ENCODE measurements at regions of chr12 and their contacts with region 1.

Region 1: DNA sequence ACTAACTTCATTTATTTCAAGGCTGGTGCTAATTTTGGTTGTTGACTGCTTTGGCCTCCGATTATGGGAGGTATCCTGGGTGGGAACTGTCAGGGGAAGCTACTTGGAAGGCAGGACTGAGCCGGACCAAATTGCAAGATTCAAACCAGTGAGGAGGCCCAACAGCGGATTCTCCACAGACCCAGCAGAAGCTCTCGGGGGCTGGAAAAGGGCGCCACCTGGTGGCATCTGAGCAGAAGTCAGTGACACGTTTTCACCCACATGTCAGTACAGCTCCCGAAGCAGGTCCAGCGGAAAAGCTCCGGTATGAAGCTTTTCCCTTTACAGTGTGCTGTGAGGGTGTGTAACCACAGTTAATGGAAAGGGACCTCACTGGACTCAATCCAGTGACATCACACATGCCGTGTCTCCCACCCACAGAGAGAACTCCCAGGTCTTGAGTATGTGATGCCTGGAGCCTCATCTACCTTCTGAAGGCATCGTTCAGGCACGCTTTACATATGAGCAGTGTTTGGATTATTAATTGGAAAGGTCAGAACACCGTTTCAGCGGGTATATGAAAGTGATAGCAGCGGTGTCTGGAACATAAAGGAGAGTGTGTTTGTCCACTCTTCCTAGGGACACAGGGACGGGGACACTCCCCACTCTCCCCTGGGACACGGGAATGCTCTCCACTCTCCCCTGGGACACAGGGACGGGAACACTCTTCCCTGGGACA is 3.6 kb upstream of the P2RX2 start:
- DNase-seq: peak; percentile 86
- ATAC-seq: peak; percentile 88
- H3K4me3 Mint-ChIP-seq: no peak overlapping the region
- H3K27ac Mint-ChIP-seq: no peak overlapping the region
- H3K4me1 Mint-ChIP-seq: peaks cover 7% of the 10 kb centered on the region
- H3K27me3 Mint-ChIP-seq: peaks cover 30% of the 10 kb centered on the region

Region 2: DNA sequence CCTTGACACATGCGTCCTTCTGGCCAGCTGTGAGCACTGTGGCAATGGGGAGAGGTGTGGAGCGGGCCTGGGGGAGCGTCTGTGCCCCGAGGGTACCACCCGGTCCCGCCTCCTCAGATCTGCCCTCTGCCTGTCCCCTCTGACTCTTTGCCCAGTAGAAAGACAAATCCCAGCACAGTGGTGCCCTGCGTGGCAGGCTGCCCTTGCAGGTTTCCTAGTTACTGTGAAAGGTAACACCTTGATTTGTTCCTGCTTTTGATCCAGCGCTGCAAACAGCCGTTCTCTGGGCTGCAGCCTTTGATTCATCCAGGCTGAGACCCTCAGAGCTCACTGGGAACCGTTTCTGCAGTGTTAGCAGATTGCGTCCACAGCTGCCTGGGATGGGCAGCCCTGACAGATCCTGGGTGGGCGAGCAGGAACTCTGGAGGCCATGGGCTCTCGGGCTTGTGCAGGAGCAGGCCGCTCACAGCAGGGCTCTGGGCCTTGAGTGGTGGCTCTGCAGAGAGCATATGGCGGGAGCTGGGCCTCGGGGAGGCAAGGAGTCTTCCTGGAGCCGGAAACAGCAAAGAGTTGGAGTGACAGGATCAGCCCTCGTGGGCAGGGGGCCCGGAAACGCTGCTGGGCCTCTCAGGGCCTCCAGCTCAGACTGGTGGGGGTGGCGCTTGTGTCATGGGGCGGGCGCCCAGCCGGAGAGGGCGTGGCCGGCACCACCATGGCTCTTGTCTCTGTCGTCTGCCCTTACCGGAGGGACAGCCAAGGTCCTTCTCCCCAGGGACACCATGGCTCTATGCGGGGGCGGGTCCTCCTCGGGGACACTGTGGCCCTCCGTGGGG is 108.5 kb before region 1 on chr12:
- CTCF ChIA-PET with region 1: no interaction called
- POLR2A ChIA-PET with region 1: no interaction called
- DNase-seq: peak; percentile 83
- ATAC-seq: peak; percentile 93
- H3K4me3 Mint-ChIP-seq: peak overlapping the region; percentile 28
- H3K27ac Mint-ChIP-seq: peak overlapping the region; percentile 83
- H3K4me1 Mint-ChIP-seq: peaks cover 41% of the 10 kb centered on the region
- H3K27me3 Mint-ChIP-seq: no peaks in the 10 kb centered on the region

Region 3: DNA sequence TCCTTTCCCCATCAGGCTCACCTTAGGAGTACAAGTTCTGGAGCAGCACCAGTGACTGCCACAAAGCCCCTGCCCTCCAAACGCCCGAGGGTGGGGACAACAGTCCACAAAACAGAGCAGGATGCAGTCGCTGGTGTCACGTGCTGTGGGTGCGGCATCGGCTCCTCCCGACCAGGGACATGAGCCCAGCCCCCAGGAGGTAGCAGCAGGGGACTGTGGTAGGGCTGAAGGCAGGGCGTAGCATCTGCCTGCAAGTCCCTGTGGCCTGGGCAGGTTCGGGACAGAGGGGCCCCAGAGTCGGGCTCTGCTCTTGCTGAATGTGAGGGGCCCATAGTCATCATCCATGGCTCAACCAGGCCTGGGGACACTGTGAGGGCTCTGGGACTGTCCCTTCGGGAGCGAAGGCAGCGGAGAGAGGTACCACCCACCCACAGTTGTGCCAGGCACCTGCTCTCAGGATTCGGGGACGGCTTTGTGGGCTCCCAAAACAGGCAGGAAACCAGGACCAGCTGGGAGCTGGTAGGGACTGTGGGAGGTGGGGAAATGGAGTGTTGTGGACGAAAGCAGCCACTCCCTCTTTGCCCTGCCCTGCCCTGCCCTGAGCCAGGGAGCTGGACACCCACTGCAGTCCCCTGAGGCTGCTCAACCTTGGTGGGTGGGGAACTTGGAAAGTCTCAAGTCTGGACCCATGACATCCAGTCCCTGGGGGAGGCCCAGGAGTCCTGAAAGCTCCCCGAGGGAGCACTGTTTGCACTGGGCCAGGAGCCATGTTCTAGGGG is 94.4 kb before region 1 on chr12:
- CTCF ChIA-PET with region 1: no interaction called
- POLR2A ChIA-PET with region 1: no interaction called
- DNase-seq: no peak
- ATAC-seq: no peak
- H3K4me3 Mint-ChIP-seq: no peak overlapping the region
- H3K27ac Mint-ChIP-seq: no peak overlapping the region
- H3K4me1 Mint-ChIP-seq: peaks cover 3% of the 10 kb centered on the region
- H3K27me3 Mint-ChIP-seq: no peaks in the 10 kb centered on the region

Region 4: DNA sequence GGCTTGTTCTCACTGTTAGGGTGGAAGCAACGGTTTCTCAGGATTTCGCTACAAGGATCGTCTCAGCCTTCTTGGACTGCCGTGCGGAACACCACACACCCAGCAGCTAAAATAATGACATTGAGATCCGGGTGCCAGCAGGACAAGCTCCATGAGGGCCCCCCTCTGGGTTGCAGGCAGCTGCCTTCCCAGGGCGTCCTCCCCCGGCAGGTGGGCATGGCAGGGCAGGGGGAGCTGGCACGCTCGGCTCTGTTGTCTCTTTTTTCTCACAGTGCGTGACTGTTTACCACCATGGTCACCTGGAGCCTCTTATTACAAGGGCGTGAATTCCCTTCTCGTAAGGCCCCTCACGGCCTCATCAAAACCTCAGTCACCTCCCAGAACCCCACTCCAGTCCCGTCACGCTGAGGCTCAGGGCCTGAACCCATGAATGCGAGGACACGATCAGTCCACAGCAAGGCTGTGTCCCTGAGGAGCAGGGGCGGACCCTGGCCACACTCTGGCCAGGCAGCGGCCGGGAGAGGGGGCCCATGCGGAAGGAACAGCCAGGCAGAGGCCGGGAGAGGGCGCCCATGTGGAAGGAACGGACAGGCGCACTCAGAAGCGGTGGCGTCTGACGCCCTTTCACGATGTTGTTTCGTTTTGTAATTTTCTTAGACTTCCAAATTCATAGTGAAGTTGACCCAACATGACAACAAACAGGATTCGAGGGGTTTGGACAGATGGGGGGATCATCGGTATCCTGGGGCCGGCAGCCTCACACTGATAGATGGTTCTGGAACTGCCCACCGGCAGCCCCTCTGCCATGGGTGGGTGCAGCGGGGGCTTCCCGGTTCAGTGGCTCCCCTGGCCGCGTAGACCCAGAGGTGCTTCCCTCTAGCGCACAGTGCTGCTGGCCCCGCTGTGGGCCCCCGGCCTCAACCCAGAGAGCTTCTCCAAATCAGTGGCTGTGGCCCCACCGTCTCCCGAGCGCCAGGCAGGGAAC is 14.7 kb before region 1 on chr12:
- CTCF ChIA-PET with region 1: interaction called, 14 read pairs
- POLR2A ChIA-PET with region 1: no interaction called
- DNase-seq: peak; percentile 54
- ATAC-seq: peak; percentile 75
- H3K4me3 Mint-ChIP-seq: peak overlapping the region; percentile 68
- H3K27ac Mint-ChIP-seq: no peak overlapping the region
- H3K4me1 Mint-ChIP-seq: peaks cover 24% of the 10 kb centered on the region
- H3K27me3 Mint-ChIP-seq: peaks cover 48% of the 10 kb centered on the region

Region 5: DNA sequence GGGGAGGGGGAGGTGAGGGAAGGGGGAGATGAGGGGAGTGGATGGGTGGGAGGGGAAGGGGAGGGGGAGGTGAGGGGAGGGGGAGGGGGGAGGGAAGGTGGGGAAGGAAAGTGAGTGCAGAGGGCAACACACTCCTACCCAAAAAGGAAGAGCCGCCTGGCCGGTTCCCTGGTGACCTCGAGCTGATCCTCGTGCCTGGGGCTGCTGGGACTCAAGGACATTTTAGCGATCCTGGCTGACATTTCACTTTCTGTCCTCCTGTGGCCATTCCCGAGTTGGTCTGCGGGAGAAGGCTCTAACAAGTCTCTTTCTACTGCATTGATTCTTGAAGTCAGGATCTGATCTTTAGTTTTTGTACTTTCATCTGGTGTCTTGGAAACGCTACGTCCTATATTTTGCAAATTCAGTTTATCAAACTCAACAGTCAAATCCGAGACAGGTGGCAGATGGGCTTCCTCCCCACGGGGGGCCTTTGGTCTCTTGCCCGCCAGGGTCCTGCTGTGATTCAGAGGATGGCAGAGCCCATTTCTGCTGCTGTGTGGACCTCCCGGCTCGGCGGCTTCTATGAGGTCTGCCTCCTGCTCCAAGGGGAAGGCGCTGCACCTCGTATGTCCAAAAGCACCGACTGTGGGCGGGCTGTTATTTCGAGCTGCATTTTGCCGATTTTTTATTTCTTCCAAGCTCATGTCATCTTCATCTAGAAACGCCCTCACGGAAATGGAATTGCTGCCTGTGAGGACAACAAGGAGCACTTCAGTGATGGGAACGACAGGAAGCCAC is 114.7 kb after region 1 on chr12:
- CTCF ChIA-PET with region 1: no interaction called
- POLR2A ChIA-PET with region 1: no interaction called
- DNase-seq: no peak
- ATAC-seq: peak; percentile 39
- H3K4me3 Mint-ChIP-seq: no peak overlapping the region
- H3K27ac Mint-ChIP-seq: peak overlapping the region; percentile 10
- H3K4me1 Mint-ChIP-seq: peaks cover 2% of the 10 kb centered on the region
- H3K27me3 Mint-ChIP-seq: no peaks in the 10 kb centered on the region